Astrocyte of the cerebellum (primary cell): ENCODE measurements at regions of chr6 and their contacts with region 1.

Region 1: DNA sequence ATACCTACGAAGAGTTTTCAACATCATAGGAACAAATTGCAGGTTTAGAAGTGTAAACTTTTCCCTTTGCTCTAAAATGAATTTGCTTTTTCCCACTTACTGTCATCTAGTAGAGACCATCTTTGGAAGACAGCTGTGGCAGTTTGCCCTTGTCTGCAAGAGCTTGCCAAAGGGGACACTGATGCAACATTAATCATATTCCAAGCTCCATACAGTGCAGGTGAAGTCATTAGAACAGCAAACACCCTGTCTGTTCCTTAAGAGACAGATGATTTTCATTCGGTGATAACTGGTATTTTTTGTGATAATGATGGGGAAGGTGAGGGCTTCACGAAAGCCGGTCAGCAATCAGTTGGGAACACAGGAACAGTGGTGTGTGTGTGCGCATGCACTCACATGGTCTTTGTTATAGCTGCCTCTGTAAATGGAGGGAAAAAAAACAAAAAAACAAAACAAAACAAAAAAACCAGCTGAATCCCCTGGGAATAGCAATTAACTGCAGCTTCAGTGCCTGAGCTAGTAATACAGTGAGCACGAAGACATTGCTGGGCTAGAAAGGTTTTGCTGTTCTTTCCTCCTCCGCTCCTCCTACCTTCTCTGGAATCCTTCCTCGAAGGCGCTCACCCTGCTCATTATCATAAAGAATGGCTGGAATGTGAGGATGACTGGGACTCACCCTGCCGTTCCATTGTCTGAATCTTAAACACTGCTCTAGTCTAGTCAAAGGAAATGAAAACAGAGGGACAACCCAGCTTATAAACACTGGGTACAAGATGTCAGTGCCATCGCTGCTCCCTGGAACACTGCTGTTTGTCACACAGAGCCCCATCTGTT is 35.2 kb upstream of the KIF13A start:
- DNase-seq: peak; percentile 49
- H3K4me3 ChIP-seq: peak overlapping the region; percentile 3
- CTCF ChIP-seq: no peak

Region 2: GRCh38 chr6:17971128-17972073 is 51.2 kb before region 1 on chr6:
- in situ Hi-C with region 1: loop called (anchors 10 kb)
- DNase-seq: no peak
- H3K4me3 ChIP-seq: no peak overlapping the region
- CTCF ChIP-seq: no peak